PC-9 (cell line): ENCODE measurements at regions of chr2 and their contacts with region 1.

Region 1: DNA sequence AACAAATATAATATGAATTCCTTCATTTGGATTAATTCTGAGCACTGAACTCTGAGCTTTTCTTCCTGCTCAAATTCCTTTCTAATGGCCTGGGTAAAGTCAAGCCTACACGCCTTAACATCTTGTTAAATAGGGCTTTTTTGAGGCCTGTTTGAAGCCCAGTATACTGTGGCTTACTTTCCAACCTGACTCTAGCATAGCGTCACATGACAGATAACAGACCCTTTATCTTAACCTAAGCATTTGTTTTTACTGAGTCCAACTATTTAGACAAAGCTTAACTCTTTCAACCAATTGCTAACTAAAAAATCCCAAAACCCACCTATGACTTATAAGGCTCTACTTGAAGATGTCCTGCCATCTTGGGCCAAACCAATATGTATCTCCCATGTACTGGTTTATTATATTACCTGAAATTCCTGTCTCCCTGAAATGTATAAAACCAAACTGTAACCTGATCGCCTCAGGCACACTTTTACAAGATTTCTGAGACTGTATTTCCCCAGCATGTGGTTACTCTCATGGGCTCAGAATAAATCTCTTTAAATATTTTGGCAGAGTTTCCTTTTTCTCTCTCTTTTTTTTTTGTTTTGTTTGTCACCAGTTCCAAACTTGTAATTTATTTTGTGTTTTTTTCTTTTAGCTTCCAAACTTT is 271.1 kb upstream of the VWC2L start:
- DNase-seq: peak in 1 of 2 experiments; percentile 53
- H3K4me3 ChIP-seq: no peak overlapping the region
- H3K27ac ChIP-seq: 0 out of 2 replicates have a peak overlapping the region, but pooled peaks have one; percentile 0
- H3K4me1 ChIP-seq: peaks cover 5% of the 10 kb centered on the region; the same call in 1 of the 2 replicates
- H3K27me3 ChIP-seq: no peaks in the 10 kb centered on the region
- CTCF ChIP-seq: no peak

Region 2: DNA sequence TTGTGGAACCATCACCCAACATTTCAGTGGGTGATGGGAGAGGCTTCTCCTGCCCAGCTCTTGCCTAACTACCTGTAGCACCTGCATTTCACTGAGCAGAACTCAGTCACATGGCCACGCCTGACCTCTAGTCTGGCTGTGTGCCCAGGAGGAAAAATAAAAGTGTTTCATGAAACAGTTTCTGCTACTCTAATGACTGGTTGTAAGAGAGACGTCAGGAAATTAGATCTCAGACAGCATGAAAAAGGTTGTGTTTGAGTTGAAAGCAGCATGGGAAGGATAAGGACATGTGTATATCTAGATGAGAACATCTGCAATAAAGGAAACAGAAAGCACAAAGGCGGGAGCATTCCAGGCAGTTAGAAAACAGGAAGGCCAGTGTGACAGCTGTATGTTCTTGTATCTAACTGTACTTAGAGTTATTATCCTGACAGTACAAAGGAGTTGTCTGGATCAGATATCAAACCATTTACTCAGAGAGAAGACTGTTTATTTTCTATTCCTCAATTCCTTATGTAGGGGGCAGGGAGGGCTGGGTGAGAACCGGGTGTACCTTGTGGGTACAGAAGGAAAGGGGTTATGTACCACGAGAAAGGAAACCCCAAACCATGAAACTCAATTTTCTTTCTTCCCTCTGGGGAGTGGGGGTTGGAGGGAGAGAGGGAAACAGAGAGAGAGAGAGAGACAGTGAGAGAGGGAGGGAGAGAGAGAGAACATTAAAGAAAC is 36.3 kb before region 1 on chr2:
- CTCF ChIA-PET with region 1: interaction called, 12 read pairs
- POLR2A ChIA-PET with region 1: no interaction called
- intact Hi-C with region 1: no loop called
- DNase-seq: peak; percentile 59
- H3K4me3 ChIP-seq: no peak overlapping the region
- H3K27ac ChIP-seq: peak overlapping the region; percentile 25; the same call in 1 of the 2 replicates
- H3K4me1 ChIP-seq: peaks cover 10% of the 10 kb centered on the region
- H3K27me3 ChIP-seq: no peaks in the 10 kb centered on the region
- CTCF ChIP-seq: no peak

Region 3: DNA sequence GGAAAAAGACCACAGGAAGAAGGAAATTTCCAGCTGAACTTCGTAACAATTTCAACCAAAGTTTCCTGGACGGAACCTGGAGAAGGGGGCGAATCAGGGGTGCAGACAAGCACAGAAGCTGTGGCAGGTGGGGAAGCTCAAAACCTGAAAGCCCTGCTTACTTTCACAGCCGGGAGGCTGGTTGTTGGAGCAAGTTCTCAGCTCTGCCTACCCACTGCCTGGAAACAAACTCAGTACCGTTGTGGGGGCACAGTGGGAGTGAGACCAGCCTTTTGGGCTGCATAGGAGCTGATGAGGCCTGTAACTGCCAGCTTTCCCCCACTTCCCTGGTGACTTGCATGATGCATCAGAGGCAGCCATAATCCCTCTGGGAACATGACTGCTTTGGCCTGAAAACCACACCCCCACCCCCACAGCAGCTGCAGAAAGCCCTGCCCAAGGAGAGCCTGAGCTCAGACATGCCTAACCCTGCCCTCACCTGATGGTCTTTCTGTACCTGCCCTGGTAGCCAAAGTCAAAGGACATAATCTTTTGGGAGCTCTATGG is 64.1 kb after region 1 on chr2:
- CTCF ChIA-PET with region 1: no interaction called
- POLR2A ChIA-PET with region 1: no interaction called
- intact Hi-C with region 1: no loop called
- DNase-seq: no peak
- H3K4me3 ChIP-seq: no peak overlapping the region
- H3K27ac ChIP-seq: no peak overlapping the region
- H3K4me1 ChIP-seq: no peaks in the 10 kb centered on the region
- H3K27me3 ChIP-seq: no peaks in the 10 kb centered on the region
- CTCF ChIP-seq: no peak

Region 4: DNA sequence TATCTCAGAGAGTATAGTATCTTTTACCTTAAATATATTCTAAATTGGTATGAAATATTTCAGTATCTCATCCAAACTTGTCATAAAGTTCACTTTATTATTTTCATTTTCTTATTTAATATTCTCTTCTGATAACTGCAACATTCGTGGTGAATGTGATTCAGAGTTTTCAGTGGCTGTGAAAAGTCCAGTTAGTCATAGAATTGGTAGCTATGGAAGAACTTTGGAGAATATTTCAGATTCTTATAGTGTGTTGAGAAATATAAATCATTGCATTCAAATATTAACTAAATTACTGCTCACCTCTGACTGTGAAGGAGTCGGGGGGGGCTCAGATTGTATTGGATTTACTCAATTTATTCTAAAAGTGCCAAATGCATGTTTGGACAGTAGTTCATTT is 92.5 kb after region 1 on chr2:
- CTCF ChIA-PET with region 1: no interaction called
- POLR2A ChIA-PET with region 1: no interaction called
- intact Hi-C with region 1: no loop called
- DNase-seq: no peak
- H3K4me3 ChIP-seq: no peak overlapping the region
- H3K27ac ChIP-seq: no peak overlapping the region
- H3K4me1 ChIP-seq: no peaks in the 10 kb centered on the region
- H3K27me3 ChIP-seq: no peaks in the 10 kb centered on the region
- CTCF ChIP-seq: no peak